Activated T-helper 2 cell treated with anti-CD3 and anti-CD28 coated beads, Interferon-gamma antibody, Interleukin-2, Interleukin-4, amounts not matched to agents 10 μg/mL and 5 μg/mL and 100 μg/mL, durations not matched to agents 14 hours and 24 hours and 36 hours (primary cell): ENCODE measurements at regions of chrX and their contacts with region 1.

Region 1: GRCh38 chrX:17689971-17690409 is 47.3 kb upstream of the SCML1 start:
- DNase-seq: no peak
- H3K4me3 Mint-ChIP-seq: no peak overlapping the region
- H3K27ac Mint-ChIP-seq: no peak overlapping the region
- H3K4me1 Mint-ChIP-seq: no peaks in the 10 kb centered on the region
- H3K27me3 Mint-ChIP-seq: no peaks in the 10 kb centered on the region

Region 2: GRCh38 chrX:17535229-17535628 is 154.8 kb before region 1 on chrX:
- intact Hi-C with region 1: loop called (anchors 1 kb)
- DNase-seq: no peak
- H3K4me3 Mint-ChIP-seq: no peak overlapping the region
- H3K27ac Mint-ChIP-seq: no peak overlapping the region
- H3K4me1 Mint-ChIP-seq: peaks cover 9% of the 10 kb centered on the region
- H3K27me3 Mint-ChIP-seq: no peaks in the 10 kb centered on the region

Region 3: DNA sequence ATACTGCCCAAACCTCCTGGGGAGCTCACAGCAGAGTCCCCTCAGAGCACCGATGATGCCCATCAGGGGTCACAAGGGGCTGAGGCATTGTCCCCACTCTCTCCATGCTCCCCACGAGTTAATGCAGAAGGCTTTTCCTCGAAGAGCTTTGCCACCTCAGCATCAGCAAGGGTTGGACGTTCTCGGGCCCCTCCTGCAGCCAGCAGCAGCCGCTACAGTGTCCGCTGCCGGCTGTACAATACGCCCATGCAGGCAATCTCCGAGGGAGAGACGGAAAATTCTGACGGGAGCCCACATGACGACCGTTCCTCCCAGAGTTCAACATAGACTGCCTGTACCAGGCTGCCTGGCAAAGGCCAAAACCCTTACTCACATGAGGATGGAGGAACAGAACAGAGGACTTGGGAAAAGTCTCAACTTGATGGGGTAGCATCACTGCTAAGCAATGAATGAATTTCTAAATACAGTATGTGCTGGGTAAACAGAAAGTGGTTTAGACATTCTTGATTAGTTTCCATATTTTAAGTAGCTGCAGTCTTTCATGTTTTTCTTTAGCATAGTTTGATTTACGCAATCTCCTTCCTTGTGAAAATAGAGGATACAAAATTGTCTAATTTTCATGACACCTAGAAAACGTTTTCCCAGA is 42.3 kb after region 1 on chrX:
- intact Hi-C with region 1: no loop called
- DNase-seq: no peak
- H3K4me3 Mint-ChIP-seq: no peak overlapping the region
- H3K27ac Mint-ChIP-seq: no peak overlapping the region
- H3K4me1 Mint-ChIP-seq: no peaks in the 10 kb centered on the region
- H3K27me3 Mint-ChIP-seq: peaks cover 6% of the 10 kb centered on the region

Region 4: GRCh38 chrX:17758382-17758781 is 68.4 kb after region 1 on chrX:
- intact Hi-C with region 1: no loop called
- DNase-seq: no peak
- H3K4me3 Mint-ChIP-seq: no peak overlapping the region
- H3K27ac Mint-ChIP-seq: no peak overlapping the region
- H3K4me1 Mint-ChIP-seq: no peaks in the 10 kb centered on the region
- H3K27me3 Mint-ChIP-seq: peaks cover 4% of the 10 kb centered on the region